ENCODE measurements at regions of chr13 and their contacts with region 1.

Region 1: DNA sequence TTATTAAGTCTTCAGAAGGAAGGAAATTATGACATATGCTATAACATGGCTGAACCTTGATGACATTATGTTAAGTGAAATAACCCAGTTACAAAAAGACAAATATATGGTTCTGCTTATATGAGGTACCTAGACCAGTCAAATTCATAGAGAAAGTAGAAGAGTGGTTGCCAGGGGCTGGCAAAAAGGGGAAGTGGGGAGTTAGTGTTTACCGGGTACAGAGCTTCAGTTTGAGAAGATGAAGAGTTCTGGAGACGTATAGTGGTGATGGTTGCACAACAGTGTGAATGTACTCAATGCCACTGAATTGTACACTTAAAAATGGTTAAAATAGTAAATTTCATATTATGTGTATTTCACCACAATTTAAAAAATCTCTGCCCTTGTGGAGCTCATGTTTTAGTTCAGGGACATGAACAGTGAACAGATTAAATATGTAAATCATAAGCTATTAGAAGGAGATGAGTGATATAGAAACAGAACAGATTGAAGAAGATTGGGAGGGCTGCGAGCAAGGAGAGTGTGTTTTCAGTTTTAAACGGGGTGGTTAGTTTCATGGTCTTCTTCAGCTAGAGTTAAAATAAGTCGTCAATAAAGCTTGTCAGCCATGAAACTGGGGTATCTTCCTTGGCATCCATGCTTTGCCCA is 355.2 kb downstream of the KCNRG start:
- DNase-seq: no peak
- ATAC-seq: no peak

Region 2: GRCh38 chr13:49914947-49915346 is 455.5 kb before region 1 on chr13:
- intact Hi-C with region 1: no loop called
- DNase-seq: no peak
- ATAC-seq: no peak

Region 3: DNA sequence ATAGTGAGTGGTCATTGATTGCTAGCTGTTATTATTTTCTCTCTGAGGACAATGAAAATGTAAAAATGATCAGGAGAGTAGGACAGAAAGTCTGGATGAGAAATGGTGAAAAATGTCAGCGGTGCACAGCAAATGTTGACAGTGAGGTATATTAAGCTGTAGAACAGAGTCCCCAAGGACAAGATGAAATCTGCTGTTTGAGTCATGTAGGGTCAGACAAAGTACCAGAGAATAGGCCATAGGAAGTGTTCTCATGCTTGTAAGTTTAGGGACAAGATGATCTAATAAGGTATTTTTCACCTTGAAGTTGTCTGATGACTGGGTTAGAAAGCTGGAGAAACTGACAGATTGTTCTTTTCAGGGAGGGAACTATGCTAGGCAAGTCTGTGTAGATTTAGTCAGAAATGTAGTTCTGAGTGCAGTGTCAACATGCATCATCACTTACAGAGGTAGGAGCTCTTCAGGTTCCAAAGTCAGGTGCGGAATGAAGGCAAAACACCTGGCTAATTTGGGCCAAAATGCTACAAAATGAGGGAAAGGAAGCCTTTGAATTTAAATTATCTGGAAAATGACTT is 103.7 kb after region 1 on chr13:
- intact Hi-C with region 1: no loop called
- DNase-seq: no peak
- ATAC-seq: no peak

Region 4: GRCh38 chr13:50801087-50801931 is 430.9 kb after region 1 on chr13:
- intact Hi-C with region 1: loop called (anchors 10 kb)
- DNase-seq: peak; percentile 33
- ATAC-seq: peak; percentile 96

Measured in Right ventricle myocardium superior (tissue), 1 donor.